ENCODE measurements at regions of chr11 and their contacts with region 1.

Region 1: DNA sequence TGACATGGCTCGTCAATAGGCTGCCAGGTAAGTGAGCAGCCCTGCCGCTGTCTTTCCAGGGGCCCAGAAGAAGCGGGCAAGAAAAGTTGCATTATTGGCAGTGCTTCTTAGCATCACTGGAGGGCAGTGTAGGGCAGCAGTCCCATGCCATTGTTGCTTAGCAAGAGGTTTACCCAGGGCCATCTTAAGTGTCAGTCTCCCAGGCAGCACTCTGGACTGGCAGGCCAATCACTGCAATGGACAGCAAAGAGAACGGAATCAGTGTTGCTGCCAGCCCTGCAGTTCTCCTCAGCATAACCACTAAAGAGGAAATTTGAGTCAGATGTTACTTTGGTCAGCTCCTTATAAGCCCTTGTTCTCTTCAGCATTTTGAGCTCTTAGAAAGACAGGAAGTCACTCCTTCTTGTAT is 13.4 kb upstream of the GRK2 start:
- DNase-seq: no peak

Region 2: DNA sequence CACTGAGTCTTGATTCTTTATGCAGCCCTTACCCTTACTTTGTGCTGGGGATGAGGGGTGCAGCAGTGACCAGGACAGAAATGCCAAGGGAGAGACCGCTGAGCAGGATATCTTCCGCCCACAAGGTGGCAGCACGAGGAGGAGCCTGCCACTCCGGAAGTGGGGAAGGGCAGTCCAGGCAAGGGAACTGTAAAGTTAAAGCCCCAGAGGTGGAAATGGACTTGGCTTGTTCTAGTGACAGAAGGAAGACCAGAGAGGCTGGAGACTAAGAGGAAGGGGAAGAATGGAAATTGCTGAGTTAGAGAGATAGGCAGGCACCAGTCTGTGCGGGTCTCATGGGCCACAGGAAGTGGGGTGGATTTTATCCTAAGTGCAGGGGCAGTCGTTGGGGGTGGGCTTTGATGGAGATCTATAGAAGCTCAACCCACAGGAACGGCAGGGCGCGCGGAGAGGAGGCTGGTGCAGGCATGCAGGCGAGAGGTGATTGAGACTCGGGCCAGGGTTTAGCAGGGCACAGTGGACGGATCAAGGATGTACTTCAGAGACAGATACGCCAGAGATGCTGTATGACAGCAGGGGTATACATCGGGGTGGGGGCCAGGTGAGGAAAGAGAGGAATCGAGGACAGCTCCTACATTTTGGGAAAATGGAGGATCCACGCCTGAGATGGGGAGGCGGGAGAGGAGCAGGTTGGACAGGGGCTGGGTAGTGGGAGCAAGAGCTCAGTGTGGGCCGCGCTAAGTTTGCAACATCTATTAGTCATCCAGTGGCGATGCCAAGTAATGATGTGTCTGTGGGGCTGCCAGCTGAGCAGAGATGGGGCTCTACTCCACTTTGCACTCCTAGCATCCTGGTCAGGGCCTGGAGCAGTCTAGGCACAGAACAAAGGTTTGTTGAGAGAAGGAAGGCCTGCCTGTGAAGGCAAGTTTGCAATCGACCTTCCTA is 10.2 kb after region 1 on chr11:
- CTCF ChIA-PET with region 1: interaction called, 12 read pairs
- POLR2A ChIA-PET with region 1: no interaction called
- DNase-seq: peak; percentile 85